ENCODE measurements at regions of chr1 and their contacts with region 1.

Region 1: GRCh38 chr1:28668191-28668955 is at the start of gene GMEB1:
- DNase-seq: peak; percentile 67 to 91 (median 82)
- ATAC-seq: peak; percentile 71 to 72
- H3K4me3 Mint-ChIP-seq: peak within 1 kb of the TSS; percentile 84 to 98 (median 94)
- H3K27ac Mint-ChIP-seq: peak within 1 kb of the TSS; percentile 90 to 100 (median 98)
- H3K4me1 Mint-ChIP-seq: peaks cover 12 to 31% (median 24%) of the 10 kb centered on the region in 4 donors
- H3K27me3 Mint-ChIP-seq: no peaks in the 10 kb centered on the region
- polyA plus RNA-seq, gene GMEB1: 12.5 to 18.2 (median 17.1) TPM

Region 2: DNA sequence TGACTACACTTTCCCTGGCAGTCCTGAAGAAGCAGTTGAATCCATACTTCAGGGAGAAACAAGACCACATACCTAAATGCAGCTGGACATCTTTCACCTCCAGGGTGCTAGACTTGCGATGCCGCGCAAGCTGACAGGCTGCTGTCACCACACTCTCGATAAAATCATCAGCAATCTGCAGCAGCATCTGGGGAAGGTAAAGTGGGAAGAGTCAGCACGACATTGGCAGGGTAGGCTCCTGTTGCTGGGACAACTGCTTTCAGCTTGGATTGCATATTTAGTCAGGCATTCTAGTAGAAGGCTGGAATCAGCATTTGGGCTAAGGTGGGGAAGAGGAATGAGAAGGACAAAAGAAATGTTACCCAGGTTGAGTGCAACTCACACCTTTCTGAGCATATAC is 55.2 kb before region 1 on chr1:
- POLR2A ChIA-PET with region 1: no interaction called
- DNase-seq: no peak
- ATAC-seq: no peak
- H3K4me3 Mint-ChIP-seq: no peak overlapping the region
- H3K27ac Mint-ChIP-seq: peak overlapping the region in 1 of 10 donors; percentile 38
- H3K4me1 Mint-ChIP-seq: no peaks in the 10 kb centered on the region
- H3K27me3 Mint-ChIP-seq: no peaks in the 10 kb centered on the region

Region 3: GRCh38 chr1:28642847-28643635 is 25.3 kb before region 1 on chr1 and contains the start of gene TAF12:
- POLR2A ChIA-PET with region 1: interaction called, 166 read pairs
- DNase-seq: peak; percentile 78 to 95 (median 90)
- ATAC-seq: peak; percentile 85 to 86
- H3K4me3 Mint-ChIP-seq: peak within 1 kb of the TSS; percentile 96 to 100 (median 99)
- H3K27ac Mint-ChIP-seq: peak within 1 kb of the TSS; percentile 96 to 99 (median 98)
- H3K4me1 Mint-ChIP-seq: peaks cover 24 to 71% (median 57%) of the 10 kb centered on the region in 4 donors
- H3K27me3 Mint-ChIP-seq: no peaks in the 10 kb centered on the region
- polyA plus RNA-seq, gene TAF12: 42.4 to 50.1 (median 47.3) TPM

Region 4: GRCh38 chr1:28648474-28649198 is 19.7 kb before region 1 on chr1 and contains the start of gene RNU11:
- POLR2A ChIA-PET with region 1: interaction called, 166 read pairs
- DNase-seq: peak; percentile 57 to 99 (median 88)
- ATAC-seq: peak; percentile 78 to 80
- H3K4me3 Mint-ChIP-seq: peak within 1 kb of the TSS; percentile 78 to 97 (median 91)
- H3K27ac Mint-ChIP-seq: peak within 1 kb of the TSS; percentile 98 to 100 (median 99)
- H3K4me1 Mint-ChIP-seq: peaks cover 16 to 38% (median 32%) of the 10 kb centered on the region in 4 donors
- H3K27me3 Mint-ChIP-seq: no peaks in the 10 kb centered on the region
- polyA plus RNA-seq, gene RNU11: not detected

Region 5: GRCh38 chr1:28736450-28737306 is 68.3 kb after region 1 on chr1 and contains the start of gene YTHDF2:
- POLR2A ChIA-PET with region 1: interaction called, 51 read pairs
- DNase-seq: peak; percentile 93 to 99 (median 98)
- ATAC-seq: peak; percentile 92 to 93
- H3K4me3 Mint-ChIP-seq: peak within 1 kb of the TSS; percentile 91 to 100 (median 96)
- H3K27ac Mint-ChIP-seq: peak within 1 kb of the TSS; percentile 93 to 99 (median 96)
- H3K4me1 Mint-ChIP-seq: peaks cover 10 to 43% (median 38%) of the 10 kb centered on the region in 4 donors
- H3K27me3 Mint-ChIP-seq: no peaks in the 10 kb centered on the region
- polyA plus RNA-seq, gene YTHDF2: 117 to 128 (median 118) TPM

Region 6: DNA sequence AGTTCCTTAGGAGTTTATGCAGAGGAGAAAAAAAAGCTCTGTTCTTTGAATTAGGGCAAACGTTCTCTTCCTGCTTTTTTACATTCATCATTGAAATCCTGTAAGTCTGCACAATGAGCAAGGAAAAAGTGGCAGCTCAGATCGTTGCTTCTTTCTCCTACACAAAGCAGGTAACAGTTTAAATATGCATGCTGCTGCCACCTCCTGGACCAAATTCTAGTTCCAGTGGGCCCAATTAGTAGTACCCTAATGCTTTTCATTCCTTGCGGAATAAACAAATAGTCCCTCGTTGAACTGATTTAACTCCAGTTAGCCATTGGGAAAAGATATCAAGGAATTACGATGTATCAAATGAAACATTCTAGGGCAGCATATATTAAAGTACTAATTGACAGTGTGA is 88.5 kb after region 1 on chr1:
- POLR2A ChIA-PET with region 1: no interaction called
- DNase-seq: peak in 2 of 10 donors; percentile 9 to 14
- ATAC-seq: no peak
- H3K4me3 Mint-ChIP-seq: peak overlapping the region in 2 of 10 donors; percentile 52 to 56
- H3K27ac Mint-ChIP-seq: peak overlapping the region in 5 of 10 donors; percentile 39 to 73 (median 58)
- H3K4me1 Mint-ChIP-seq: peaks cover 19 to 40% (median 36%) of the 10 kb centered on the region in 4 donors
- H3K27me3 Mint-ChIP-seq: no peaks in the 10 kb centered on the region

Region 7: DNA sequence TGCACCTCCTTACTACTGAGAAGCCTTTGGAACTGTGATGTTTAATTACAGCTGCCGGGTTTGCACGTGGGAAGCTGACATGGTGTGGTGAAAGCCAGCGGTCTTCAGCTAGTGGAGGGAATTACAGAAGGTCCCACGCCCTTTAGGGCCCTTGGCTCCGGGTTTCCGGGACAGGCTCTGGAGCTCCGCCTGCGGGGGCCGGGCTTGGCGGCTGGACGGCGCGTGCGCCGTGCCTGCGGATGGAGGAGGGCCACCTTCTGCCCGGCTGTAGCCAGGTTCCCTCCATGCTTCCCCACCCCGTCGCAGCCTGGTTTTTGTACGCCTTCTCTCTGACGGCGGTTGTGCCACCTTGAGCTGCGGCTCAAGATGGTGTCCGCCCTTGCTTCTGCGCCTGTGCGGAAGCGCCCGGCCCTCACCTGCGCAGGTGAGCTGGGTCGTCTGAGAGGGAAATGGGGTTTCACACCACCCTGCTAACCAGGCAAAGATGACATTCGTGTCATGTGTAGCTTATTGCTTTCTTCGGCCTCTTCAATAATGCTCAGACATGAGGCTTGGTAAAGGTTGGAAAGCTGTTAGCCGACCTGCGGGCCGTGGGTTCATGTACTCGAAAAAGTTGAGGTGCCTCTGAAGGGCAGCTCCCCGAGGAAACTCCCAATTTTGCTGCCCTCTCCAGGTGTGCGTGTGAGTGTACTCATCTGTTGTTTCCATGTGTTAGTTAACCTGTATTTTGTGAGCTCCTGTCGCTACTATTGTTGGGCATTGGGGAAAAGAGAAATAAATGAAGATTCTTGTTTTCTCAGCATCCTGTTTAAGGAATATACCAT is 107.0 kb after region 1 on chr1:
- POLR2A ChIA-PET with region 1: interaction called, 11 read pairs
- DNase-seq: peak; percentile 55 to 82 (median 72)
- ATAC-seq: peak; percentile 92 to 95
- H3K4me3 Mint-ChIP-seq: peak overlapping the region; percentile 76 to 89 (median 83)
- H3K27ac Mint-ChIP-seq: peak overlapping the region; percentile 64 to 94 (median 89)
- H3K4me1 Mint-ChIP-seq: peaks cover 0 to 15% (median 7%) of the 10 kb centered on the region in 4 donors
- H3K27me3 Mint-ChIP-seq: no peaks in the 10 kb centered on the region

Region 8: DNA sequence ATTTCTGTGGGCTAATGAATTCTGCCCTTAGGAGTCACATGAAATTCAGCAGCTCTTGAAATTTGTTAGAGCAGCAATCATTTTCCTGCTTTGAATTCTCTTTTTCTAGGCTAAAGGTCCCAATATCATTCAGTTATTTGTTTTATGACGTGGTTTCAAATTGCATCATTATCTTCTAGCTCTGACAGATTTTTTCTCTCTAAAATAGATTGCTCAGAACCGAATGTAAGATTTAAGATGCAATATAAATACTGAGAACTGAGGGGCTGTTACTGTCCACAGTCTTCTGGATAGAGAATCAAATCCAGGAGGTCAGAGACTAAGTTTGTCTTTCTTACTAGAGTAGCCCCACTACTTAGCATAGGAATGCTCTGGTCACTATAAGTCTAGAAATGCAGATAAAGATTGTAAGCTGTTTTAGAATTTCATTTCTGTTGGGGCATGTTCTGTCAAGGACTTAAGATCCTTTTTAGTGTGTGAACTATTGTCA is 305.6 kb after region 1 on chr1:
- POLR2A ChIA-PET with region 1: no interaction called
- DNase-seq: no peak
- ATAC-seq: no peak
- H3K4me3 Mint-ChIP-seq: no peak overlapping the region
- H3K27ac Mint-ChIP-seq: peak overlapping the region in 3 of 10 donors; percentile 17 to 83 (median 18)
- H3K4me1 Mint-ChIP-seq: peaks cover 29 to 85% (median 78%) of the 10 kb centered on the region in 4 donors
- H3K27me3 Mint-ChIP-seq: no peaks in the 10 kb centered on the region